IMR-90 (cell line): ENCODE measurements at regions of chr13 and their contacts with region 1.

Region 1: DNA sequence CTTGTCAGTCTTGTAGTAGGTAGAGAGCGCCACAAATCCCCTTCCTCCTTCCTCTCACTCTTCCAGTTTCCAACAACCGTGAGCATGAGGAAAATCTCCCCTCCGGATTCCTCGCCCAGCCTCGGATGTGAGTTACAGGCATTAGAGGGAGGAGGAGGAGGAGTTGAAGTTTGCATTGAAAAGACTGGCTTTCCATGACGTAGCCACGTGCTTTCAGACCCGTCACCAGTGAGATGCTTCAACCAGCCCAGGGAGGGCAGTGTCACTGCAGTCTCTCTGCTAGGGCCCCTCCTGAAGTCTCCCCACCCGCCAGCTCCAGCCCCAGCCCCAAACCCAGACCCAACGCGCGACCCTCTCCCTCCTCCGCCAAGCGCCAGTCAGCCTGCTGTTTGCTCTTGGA is 442 bp upstream of the FGF14 start:
- DNase-seq: peak; percentile 39
- ATAC-seq: peak; percentile 56; the same call in 1 of the 2 replicates
- H3K4me3 ChIP-seq: no peak overlapping the region; the same call in 1 of the 2 replicates
- H3K27ac ChIP-seq: no peak overlapping the region
- H3K4me1 ChIP-seq: peaks cover 3% of the 10 kb centered on the region
- H3K27me3 ChIP-seq: peaks cover 28% of the 10 kb centered on the region
- CTCF ChIP-seq: no peak
- POLR2A ChIP-seq: no peak
- RAD21 ChIP-seq: no peak

Region 2: GRCh38 chr13:102170295-102170694 is 232.0 kb before region 1 on chr13:
- CTCF ChIA-PET with region 1: no interaction called
- POLR2A ChIA-PET with region 1: no interaction called
- dilution Hi-C with region 1: no loop called
- in situ Hi-C with region 1: no loop called
- intact Hi-C with region 1: no loop called
- DNase-seq: no peak
- ATAC-seq: no peak
- H3K4me3 ChIP-seq: no peak overlapping the region
- H3K27ac ChIP-seq: no peak overlapping the region
- H3K4me1 ChIP-seq: no peaks in the 10 kb centered on the region
- H3K27me3 ChIP-seq: no peaks in the 10 kb centered on the region
- CTCF ChIP-seq: no peak
- POLR2A ChIP-seq: no peak
- RAD21 ChIP-seq: no peak

Region 3: GRCh38 chr13:102369302-102369701 is 33.0 kb before region 1 on chr13:
- CTCF ChIA-PET with region 1: no interaction called
- POLR2A ChIA-PET with region 1: no interaction called
- dilution Hi-C with region 1: no loop called
- in situ Hi-C with region 1: no loop called
- intact Hi-C with region 1: no loop called
- DNase-seq: no peak
- ATAC-seq: no peak
- H3K4me3 ChIP-seq: no peak overlapping the region
- H3K27ac ChIP-seq: no peak overlapping the region
- H3K4me1 ChIP-seq: no peaks in the 10 kb centered on the region
- H3K27me3 ChIP-seq: no peaks in the 10 kb centered on the region
- CTCF ChIP-seq: no peak
- POLR2A ChIP-seq: no peak
- RAD21 ChIP-seq: no peak

Region 4: GRCh38 chr13:102440259-102440936 is 38.1 kb after region 1 on chr13:
- CTCF ChIA-PET with region 1: no interaction called
- POLR2A ChIA-PET with region 1: interaction called, 13 read pairs
- dilution Hi-C with region 1: no loop called
- in situ Hi-C with region 1: no loop called
- intact Hi-C with region 1: no loop called
- DNase-seq: no peak
- ATAC-seq: no peak
- H3K4me3 ChIP-seq: no peak overlapping the region
- H3K27ac ChIP-seq: no peak overlapping the region
- H3K4me1 ChIP-seq: no peaks in the 10 kb centered on the region
- H3K27me3 ChIP-seq: no peaks in the 10 kb centered on the region
- CTCF ChIP-seq: no peak
- POLR2A ChIP-seq: no peak
- RAD21 ChIP-seq: no peak